Psoas muscle (tissue), 8 donors: ENCODE measurements at regions of chr2 and their contacts with region 1.

Region 1: GRCh38 chr2:111689941-111690340 is 194.1 kb downstream of the ANAPC1 start:
- DNase-seq: no peak
- ATAC-seq: no peak
- H3K4me3 ChIP-seq: no peak overlapping the region
- H3K27ac ChIP-seq: no peak overlapping the region
- H3K4me1 ChIP-seq: peaks cover 5% of the 10 kb centered on the region
- H3K27me3 ChIP-seq: no peaks in the 10 kb centered on the region
- CTCF ChIP-seq: no peak

Region 2: GRCh38 chr2:111652038-111652437 is 37.9 kb before region 1 on chr2:
- intact Hi-C with region 1: loop called in 1 of 2 experiments (anchors 1 kb)
- DNase-seq: no peak
- ATAC-seq: no peak
- H3K4me3 ChIP-seq: no peak overlapping the region
- H3K27ac ChIP-seq: no peak overlapping the region
- H3K4me1 ChIP-seq: no peaks in the 10 kb centered on the region
- H3K27me3 ChIP-seq: no peaks in the 10 kb centered on the region
- CTCF ChIP-seq: no peak